Transverse colon (tissue), 4 donors: ENCODE measurements at regions of chr4 and their contacts with region 1.

Region 1: GRCh38 chr4:104064646-104065577 is 345.1 kb upstream of the TACR3 start:
- DNase-seq: peak; percentile 15
- H3K4me3 ChIP-seq: no peak overlapping the region
- H3K27ac ChIP-seq: no peak overlapping the region
- H3K4me1 ChIP-seq: no peaks in the 10 kb centered on the region
- H3K27me3 ChIP-seq: no peaks in the 10 kb centered on the region
- CTCF ChIP-seq: peak; percentile 41 to 53 (median 46)
- EP300 ChIP-seq: no peak
- POLR2A ChIP-seq: no peak

Region 2: DNA sequence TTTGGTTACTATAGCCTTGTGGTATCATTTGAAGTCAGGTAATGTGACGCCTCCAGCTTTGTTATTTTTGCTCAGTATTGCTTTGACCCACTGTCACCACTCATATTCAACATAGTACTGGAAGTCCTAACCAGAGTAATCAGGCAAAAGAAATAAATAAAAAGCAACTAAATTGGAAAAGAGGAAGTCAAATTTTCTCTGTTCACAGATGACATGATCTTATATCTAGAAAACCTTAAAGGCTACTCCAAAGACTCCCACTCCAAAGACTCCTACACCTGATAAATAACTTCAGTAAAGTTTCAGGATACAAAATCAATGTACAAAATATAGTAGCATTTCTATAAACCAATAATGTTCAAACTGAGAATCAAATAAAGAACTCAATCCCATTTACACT is 81.1 kb after region 1 on chr4:
- in situ Hi-C with region 1: no loop called
- intact Hi-C with region 1: no loop called
- DNase-seq: no peak
- H3K4me3 ChIP-seq: no peak overlapping the region
- H3K27ac ChIP-seq: no peak overlapping the region
- H3K4me1 ChIP-seq: no peaks in the 10 kb centered on the region
- H3K27me3 ChIP-seq: no peaks in the 10 kb centered on the region
- CTCF ChIP-seq: no peak
- EP300 ChIP-seq: no peak
- POLR2A ChIP-seq: no peak

Region 3: DNA sequence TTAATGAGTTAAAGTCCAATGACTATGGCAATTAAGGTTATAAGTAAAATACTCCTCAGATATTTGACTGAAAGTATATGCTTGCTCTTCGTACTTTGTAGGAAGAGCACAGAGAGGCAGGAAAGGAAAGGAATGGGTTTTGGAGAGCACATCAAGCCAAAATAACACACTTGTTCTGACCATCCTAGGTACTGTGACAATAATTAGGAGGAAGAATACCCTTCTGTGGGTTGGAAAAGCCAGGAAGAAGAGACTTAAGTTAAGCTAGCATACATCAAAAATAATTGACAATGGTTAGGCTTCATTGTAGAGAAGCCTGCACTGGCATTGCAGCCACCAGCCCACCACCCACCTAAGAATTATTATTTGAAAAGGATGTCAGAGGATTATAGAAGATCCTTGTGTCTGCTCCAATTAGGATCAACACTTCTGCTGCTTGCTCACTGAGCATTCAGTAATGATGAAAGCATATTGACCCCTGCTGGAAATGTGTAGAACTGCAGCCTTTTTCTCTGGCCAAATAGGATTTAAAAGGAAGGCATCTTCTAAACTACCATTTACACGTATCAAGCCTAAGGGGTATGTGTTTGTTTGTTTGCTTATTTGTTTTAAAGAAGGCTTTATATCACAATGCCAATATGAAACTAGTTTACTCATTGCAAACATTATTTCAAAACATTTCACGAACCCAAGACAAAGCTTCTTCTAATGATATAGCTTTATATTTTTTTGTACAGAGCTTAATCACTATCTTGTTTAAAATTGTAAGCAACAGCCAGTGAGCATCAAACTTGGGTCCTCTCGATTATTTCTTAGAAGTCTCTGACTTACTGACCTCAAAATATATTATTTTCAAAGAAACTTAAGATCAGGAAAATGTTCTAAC is 795.6 kb after region 1 on chr4:
- in situ Hi-C with region 1: loop called in 3 of 4 experiments (anchors 10 to 25 kb)
- intact Hi-C with region 1: no loop called
- DNase-seq: peak; percentile 49
- H3K4me3 ChIP-seq: no peak overlapping the region
- H3K27ac ChIP-seq: no peak overlapping the region
- H3K4me1 ChIP-seq: no peaks in the 10 kb centered on the region
- H3K27me3 ChIP-seq: no peaks in the 10 kb centered on the region
- CTCF ChIP-seq: peak; percentile 79 to 92 (median 89)
- EP300 ChIP-seq: no peak
- POLR2A ChIP-seq: no peak